ENCODE measurements at regions of chr5 and their contacts with region 1.

Region 1: DNA sequence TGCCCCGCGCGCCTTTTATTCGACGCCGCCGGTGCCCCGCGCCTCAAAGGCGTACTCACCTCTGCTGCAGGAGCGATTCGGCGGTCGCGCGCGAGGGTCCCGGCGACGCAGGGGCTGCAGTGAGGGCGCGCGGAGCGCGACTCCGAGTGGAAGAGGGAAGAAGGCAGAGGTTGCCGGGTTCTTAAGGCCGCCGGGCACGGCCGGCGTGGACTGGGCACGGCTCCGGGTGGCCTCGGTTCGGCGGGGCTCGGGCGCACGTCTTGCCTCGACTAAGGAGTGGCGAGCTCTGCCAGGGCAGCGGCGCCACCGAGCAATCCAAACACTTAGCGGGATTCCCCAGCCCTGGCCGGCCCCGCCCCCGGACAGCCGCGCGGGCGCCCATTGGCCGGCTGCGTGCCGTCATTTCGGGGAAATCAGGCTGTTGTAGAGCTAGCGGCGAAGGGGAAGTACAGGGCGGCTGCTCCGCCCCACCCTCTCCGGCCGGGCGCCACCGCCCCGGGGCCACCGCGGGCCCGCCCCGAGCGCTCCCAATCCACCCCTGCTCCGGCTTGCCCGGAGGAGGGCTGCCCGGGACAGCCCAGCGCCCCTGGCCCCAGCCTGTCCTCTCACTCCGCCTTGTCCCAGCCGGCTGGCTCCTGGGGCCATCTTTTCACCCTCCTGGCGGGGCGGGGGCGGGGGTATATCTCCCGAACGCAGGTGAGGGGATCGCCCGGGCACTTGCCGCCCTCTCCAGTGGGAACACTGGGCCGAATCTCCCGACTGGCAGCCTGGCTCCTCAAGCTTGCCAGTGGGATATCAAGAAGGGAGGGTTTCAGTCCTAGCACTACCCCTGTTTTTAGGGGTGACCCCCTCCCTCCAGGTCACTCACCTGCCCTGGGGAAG is at the start of gene IRF1:
- H3K4me3 ChIP-seq: peak within 1 kb of the TSS; percentile 73
- H3K27ac ChIP-seq: peak within 1 kb of the TSS; percentile 79; the same call in 1 of the 2 replicates
- H3K4me1 ChIP-seq: peaks cover 6% of the 10 kb centered on the region
- CTCF ChIP-seq: peak; percentile 58

Region 2: GRCh38 chr5:132410451-132411381 is 80.0 kb before region 1 on chr5:
- CTCF ChIA-PET with region 1: interaction called, 3 read pairs
- POLR2A ChIA-PET with region 1: interaction called, 11 read pairs
- H3K4me3 ChIP-seq: peak overlapping the region; percentile 54
- H3K27ac ChIP-seq: peak overlapping the region; percentile 93
- H3K4me1 ChIP-seq: peaks cover 4% of the 10 kb centered on the region; the same call in 1 of the 2 replicates
- CTCF ChIP-seq: peak; percentile 55; the same call in 1 of the 2 replicates

Region 3: GRCh38 chr5:132426525-132427138 is 64.1 kb before region 1 on chr5:
- CTCF ChIA-PET with region 1: interaction called, 12 read pairs
- POLR2A ChIA-PET with region 1: interaction called, 27 read pairs
- H3K4me3 ChIP-seq: no peak overlapping the region
- H3K27ac ChIP-seq: no peak overlapping the region
- H3K4me1 ChIP-seq: 0 out of 2 replicates have a peak, but pooled peaks cover 5% of the 10 kb centered on the region
- CTCF ChIP-seq: peak; percentile 28

Region 4: DNA sequence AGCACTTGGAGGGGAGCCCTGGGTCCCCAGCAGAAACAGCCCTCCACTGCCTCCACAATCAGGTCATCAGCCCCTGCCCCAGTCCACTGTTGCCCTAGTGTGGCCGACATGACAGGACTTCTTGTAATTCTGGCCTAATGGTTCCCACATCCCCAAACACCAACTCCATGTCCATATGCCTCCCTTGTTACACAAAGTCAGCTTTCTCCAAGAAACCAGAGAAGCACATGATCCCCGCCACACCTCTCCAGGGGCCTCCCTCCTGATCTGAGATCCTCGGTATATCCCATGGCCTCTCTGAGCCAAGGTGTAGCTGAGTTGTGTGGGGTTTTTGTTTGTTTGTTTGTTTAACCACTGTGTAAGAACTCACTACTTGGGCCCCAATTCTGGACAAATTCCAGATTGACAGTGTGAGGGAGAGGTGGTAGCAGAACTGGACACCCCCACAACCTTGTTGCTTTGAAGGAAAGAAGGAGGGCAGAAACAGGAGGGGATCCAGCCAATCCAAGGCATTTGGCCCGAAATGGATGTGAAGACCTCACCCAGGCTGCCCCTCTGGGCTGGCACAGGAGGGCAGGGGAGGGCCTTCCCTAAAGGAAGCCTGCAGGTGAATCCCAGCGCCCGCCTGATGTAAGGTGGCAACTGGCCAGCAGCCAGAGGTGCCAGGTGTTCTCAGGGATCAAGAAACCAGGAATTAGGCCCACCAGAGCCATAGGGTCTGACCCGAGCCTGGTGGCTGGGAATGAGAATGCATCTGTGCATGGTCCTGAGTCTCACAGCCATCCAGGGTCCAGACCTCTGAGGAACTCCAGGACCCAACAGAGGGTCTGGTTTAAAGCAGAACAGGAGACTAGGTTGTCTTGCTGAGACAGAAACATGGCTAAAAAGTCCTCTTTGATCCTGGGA is 13.6 kb before region 1 on chr5:
- CTCF ChIA-PET with region 1: interaction called, 3 read pairs
- POLR2A ChIA-PET with region 1: interaction called, 24 read pairs
- H3K4me3 ChIP-seq: no peak overlapping the region
- H3K27ac ChIP-seq: no peak overlapping the region
- H3K4me1 ChIP-seq: no peaks in the 10 kb centered on the region
- CTCF ChIP-seq: no peak

Region 5: DNA sequence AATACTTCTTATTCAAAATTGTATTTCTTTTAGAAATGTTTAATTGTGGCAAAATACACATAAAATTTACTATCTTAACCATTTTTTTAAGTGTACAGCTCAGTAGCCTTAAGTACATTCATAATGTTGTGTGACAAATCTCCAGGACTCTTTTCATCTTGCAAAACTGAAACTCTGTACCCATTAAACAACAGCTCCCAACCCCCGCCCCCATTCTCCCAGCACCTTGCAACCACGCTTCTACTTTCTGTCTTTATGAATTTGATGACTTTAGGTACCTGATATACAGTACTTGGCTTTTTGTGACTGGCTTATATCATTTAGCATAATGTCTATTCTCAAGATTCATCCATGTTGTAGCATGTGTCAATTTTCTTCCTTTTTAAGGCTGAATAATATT is 55.4 kb after region 1 on chr5:
- CTCF ChIA-PET with region 1: no interaction called
- POLR2A ChIA-PET with region 1: no interaction called
- H3K4me3 ChIP-seq: no peak overlapping the region
- H3K27ac ChIP-seq: no peak overlapping the region
- H3K4me1 ChIP-seq: no peaks in the 10 kb centered on the region
- CTCF ChIP-seq: no peak

Region 6: GRCh38 chr5:132566657-132567056 is 75.9 kb after region 1 on chr5:
- CTCF ChIA-PET with region 1: no interaction called
- POLR2A ChIA-PET with region 1: no interaction called
- H3K4me3 ChIP-seq: no peak overlapping the region
- H3K27ac ChIP-seq: no peak overlapping the region
- H3K4me1 ChIP-seq: no peaks in the 10 kb centered on the region
- CTCF ChIP-seq: no peak